Endothelial cell of umbilical vein (primary cell): ENCODE measurements at regions of chr7 and their contacts with region 1.

Region 1: GRCh38 chr7:128830231-128831177 is at the start of gene FLNC:
- DNase-seq: peak; percentile 68
- H3K4me3 ChIP-seq: peak within 1 kb of the TSS; percentile 54 to 73 (median 69)
- H3K27ac ChIP-seq: peak within 1 kb of the TSS; percentile 49
- H3K4me1 ChIP-seq: peaks cover 42% of the 10 kb centered on the region
- H3K27me3 ChIP-seq: no peaks in the 10 kb centered on the region
- CTCF ChIP-seq: no peak
- POLR2A ChIP-seq: peak; percentile 23
- total RNA-seq, gene FLNC: 81.8 and 81.9 TPM in 2 replicates

Region 2: DNA sequence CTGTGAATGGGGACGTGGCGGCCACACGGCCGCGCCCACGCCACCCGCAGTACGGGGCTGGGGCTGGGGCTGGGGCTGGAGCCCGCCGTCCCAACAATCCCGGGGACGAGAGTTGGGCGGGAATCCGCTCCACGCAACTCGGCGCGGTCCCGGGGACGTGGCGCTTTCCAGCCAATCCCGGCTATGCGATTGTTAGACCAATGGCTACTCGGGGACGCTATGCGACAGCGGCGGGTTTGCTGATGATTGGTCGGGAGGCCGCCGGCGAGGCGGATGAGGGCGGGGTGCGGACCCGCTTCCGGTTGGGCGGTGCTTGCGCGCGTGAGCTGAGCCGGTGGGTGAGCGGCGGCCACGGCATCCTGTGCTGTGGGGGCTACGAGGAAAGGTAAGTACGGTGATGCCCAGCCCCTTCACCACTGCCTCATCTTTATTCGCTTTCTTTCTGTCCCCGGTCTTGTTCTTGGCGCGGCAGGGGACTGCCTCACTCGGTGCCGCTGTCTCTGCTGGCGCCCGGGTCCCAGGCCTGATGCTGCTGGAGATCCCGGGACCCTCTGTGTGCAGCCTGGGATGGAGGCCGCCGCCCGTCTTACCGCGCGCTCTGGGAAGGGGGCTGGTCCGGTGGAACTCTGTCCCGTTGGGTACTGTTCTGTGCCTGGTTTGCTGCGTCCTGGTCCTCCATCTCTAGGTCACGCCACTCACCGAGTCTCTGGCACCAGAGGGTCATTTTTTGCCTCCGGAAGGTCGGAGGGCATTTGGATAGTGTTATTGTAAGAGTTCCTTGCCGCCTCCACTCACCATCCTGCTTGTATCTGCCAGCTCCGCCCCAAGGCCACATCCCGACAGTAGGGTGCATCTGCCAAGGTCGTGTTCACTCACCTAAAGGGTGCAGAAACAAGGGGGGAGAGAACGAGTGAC is 91.2 kb before region 1 on chr7 and contains the start of gene CALU:
- CTCF ChIA-PET with region 1: no interaction called
- POLR2A ChIA-PET with region 1: interaction called, 7 read pairs
- dilution Hi-C with region 1: no loop called
- intact Hi-C with region 1: loop called (anchors 1 kb)
- DNase-seq: peak; percentile 98
- H3K4me3 ChIP-seq: peak within 1 kb of the TSS; percentile 55 to 95 (median 88)
- H3K27ac ChIP-seq: peak within 1 kb of the TSS; percentile 85
- H3K4me1 ChIP-seq: peaks cover 33% of the 10 kb centered on the region
- H3K27me3 ChIP-seq: no peaks in the 10 kb centered on the region
- CTCF ChIP-seq: no peak
- POLR2A ChIP-seq: peak; percentile 97
- total RNA-seq, gene CALU: 254 and 257 TPM in 2 replicates

Region 3: DNA sequence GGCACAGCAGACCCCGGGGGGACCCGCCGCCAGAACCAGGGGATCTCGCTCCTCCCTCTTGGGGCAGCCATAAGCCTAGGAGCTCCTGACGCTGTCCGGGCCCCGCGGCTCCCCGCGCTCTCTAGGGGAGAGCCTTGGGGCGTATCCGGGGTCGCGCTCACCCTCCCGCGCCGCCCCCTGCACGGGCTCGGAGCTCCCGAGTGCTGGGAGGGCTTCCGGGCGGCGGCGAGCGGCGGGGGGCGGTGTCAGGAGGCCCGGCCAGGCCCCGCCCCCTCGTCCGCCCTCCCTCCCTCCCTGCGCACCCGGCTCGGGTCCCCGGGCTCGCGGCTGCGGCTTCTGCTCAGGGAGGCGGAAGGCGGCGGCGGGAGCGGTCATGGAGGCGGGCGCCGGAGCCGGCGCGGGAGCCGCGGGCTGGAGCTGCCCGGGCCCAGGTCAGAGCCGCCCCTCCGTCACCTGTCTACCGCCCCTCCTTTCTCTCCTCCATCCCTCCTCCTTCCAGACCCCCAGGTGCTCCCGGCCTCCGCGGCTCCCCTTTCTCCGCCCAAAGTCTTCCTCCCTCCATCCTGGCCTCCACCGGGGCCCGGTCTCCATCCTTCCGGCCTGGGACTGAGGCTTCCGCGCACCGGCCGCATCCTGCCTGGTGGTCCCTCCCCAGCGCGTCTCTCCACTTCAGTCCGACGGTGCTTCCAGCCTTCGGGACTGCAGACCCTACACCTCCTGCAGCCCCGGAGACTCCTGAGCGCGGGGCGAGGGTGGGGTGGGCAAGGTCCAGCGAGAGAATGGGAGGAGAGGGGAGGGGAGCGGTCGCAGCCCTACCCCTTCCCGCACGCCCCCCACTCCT is 39.2 kb before region 1 on chr7:
- CTCF ChIA-PET with region 1: interaction called, 8 read pairs
- POLR2A ChIA-PET with region 1: no interaction called
- dilution Hi-C with region 1: no loop called
- intact Hi-C with region 1: loop called (anchors 2 kb)
- DNase-seq: peak; percentile 43
- H3K4me3 ChIP-seq: peak overlapping the region; percentile 55 to 80 (median 55)
- H3K27ac ChIP-seq: no peak overlapping the region
- H3K4me1 ChIP-seq: peaks cover 4% of the 10 kb centered on the region
- H3K27me3 ChIP-seq: peaks cover 16 to 32% of the 10 kb centered on the region in 2 experiments
- CTCF ChIP-seq: no peak
- POLR2A ChIP-seq: no peak

Region 4: GRCh38 chr7:128841921-128842651 is 11.6 kb after region 1 on chr7:
- CTCF ChIA-PET with region 1: interaction called, 48 read pairs
- POLR2A ChIA-PET with region 1: interaction called, 4 read pairs
- dilution Hi-C with region 1: no loop called
- intact Hi-C with region 1: no loop called
- DNase-seq: peak; percentile 41
- H3K4me3 ChIP-seq: no peak overlapping the region
- H3K27ac ChIP-seq: no peak overlapping the region
- H3K4me1 ChIP-seq: no peaks in the 10 kb centered on the region
- H3K27me3 ChIP-seq: no peaks in the 10 kb centered on the region
- CTCF ChIP-seq: peak; percentile 58 to 86
- POLR2A ChIP-seq: no peak

Region 5: DNA sequence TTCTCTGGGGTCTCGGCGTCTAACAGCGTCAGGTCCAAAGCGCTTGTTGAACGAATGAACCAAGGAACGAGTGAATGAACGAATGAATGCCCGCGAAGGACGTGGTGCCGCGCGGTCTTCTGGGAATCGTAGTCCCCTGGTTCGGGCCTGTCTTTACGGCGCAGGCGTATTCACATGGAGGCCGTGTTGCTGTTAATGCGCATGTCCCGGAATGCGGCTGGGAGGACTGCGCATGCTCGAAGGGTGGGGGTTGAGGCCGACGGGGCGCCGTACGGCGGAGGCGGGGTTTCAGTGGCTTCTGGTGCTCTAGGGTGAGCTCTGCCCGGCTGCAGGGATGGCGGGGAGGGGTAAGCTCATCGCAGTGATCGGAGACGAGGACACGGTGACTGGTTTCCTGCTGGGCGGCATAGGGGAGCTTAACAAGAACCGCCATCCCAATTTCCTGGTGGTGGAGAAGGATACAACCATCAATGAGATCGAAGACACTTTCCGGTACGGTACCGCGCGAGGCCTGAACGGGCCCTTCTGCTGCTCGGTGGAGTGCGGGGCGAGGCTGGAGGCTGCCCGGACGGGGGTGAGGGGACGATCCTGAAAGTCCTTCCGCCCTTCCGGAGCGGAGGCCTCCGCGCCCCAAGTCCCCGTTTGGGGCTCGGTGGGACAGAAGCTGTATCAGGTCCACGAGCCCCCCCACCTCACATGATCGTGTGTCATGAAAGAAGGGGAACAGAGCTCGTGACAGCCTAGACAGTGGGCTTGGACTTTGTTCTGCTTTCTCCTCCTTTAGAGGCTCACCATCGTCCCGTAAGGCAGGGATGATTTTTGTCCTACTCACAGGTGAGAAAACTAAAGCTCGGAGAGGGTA is 32.3 kb after region 1 on chr7 and contains the start of gene ATP6V1F:
- CTCF ChIA-PET with region 1: interaction called, 7 read pairs
- POLR2A ChIA-PET with region 1: interaction called, 6 read pairs
- dilution Hi-C with region 1: no loop called
- intact Hi-C with region 1: loop called (anchors 1 kb)
- DNase-seq: peak; percentile 100
- H3K4me3 ChIP-seq: peak within 1 kb of the TSS; percentile 48 to 67 (median 62)
- H3K27ac ChIP-seq: peak within 1 kb of the TSS; percentile 57
- H3K4me1 ChIP-seq: peaks cover 9% of the 10 kb centered on the region
- H3K27me3 ChIP-seq: no peaks in the 10 kb centered on the region
- CTCF ChIP-seq: no peak
- POLR2A ChIP-seq: peak; percentile 91
- total RNA-seq, gene ATP6V1F: 141 and 156 TPM in 2 replicates

Region 6: GRCh38 chr7:130141161-130141883 is 1310.8 kb after region 1 on chr7:
- CTCF ChIA-PET with region 1: no interaction called
- POLR2A ChIA-PET with region 1: no interaction called
- dilution Hi-C with region 1: no loop called
- intact Hi-C with region 1: loop called (anchors 5 kb)
- DNase-seq: peak; percentile 48
- H3K4me3 ChIP-seq: peak overlapping the region; percentile 12 to 47 (median 45)
- H3K27ac ChIP-seq: peak overlapping the region; percentile 5
- H3K4me1 ChIP-seq: peaks cover 3% of the 10 kb centered on the region
- H3K27me3 ChIP-seq: no peaks in the 10 kb centered on the region
- CTCF ChIP-seq: no peak
- POLR2A ChIP-seq: peak; percentile 43